ENCODE measurements at regions of chr17 and their contacts with region 1.

Region 1: GRCh38 chr17:13594762-13595598 is 6.7 kb downstream of the HS3ST3A1 start:
- DNase-seq: peak; percentile 94
- H3K4me3 Mint-ChIP-seq: peak overlapping the region; percentile 51
- H3K27ac Mint-ChIP-seq: peak overlapping the region; percentile 71
- H3K4me1 Mint-ChIP-seq: peaks cover 44% of the 10 kb centered on the region
- H3K27me3 Mint-ChIP-seq: no peaks in the 10 kb centered on the region
- CTCF ChIP-seq: peak; percentile 86

Region 2: DNA sequence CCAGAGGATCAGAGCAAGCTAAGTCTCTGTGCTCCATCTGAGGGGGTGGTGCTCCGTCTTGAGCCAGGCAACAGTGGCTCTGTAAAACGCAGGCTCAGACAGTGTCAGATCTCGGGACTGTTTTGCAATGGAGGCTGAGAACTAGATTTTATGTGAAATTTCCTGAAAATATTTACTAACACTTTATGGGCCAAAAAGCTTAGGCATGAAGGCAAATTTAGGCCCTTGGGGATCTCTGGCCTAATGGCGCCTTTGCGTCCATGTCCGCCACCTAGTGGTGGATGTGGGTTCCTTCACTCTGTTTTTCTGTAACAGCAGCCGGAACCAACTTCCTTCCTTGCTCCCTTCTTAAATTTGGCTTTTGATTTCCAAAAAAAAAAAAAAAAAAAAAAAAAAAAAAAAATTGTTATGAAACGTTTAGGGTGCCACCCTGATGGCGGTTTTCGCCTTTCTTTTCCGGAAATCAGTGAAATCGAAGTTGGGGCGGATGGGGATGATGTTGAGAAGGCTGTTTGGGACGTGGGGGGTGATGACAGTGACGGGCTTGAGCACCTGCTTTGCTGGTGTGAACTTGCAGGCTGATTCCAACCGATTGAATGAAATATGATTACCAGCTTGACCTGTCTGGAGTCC is 563.1 kb before region 1 on chr17:
- CTCF ChIA-PET with region 1: interaction called, 5 read pairs
- POLR2A ChIA-PET with region 1: no interaction called
- intact Hi-C with region 1: loop called (anchors 10 kb)
- DNase-seq: peak; percentile 57
- H3K4me3 Mint-ChIP-seq: no peak overlapping the region
- H3K27ac Mint-ChIP-seq: no peak overlapping the region
- H3K4me1 Mint-ChIP-seq: peaks cover 5% of the 10 kb centered on the region
- H3K27me3 Mint-ChIP-seq: peaks cover 37% of the 10 kb centered on the region
- CTCF ChIP-seq: peak; percentile 65

Region 3: DNA sequence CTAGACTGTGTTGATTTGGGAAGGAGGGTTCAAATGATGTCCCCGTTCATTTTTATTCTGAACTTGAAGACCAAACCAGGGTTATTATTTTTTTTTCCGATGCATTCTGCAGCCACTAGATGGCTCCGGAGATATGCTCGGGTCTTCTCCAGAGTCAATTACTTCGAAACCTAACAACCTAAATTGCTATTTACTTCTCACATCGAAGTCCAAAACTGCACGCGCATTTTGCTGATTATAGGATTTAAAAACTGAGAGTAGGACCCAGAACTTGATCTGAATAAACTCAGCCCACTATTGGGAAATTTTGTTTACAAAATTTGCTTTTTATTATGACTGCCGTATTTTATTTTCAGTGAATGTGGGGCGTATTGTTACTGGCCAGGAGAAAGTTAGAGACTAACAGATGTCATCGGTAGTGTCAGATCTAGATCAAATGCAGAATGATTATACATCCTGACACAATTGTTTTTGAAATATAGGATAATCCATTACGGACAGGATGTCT is 257.1 kb before region 1 on chr17:
- CTCF ChIA-PET with region 1: interaction called, 21 read pairs
- POLR2A ChIA-PET with region 1: interaction called, 3 read pairs
- intact Hi-C with region 1: loop called (anchors 1 kb)
- DNase-seq: peak; percentile 77
- H3K4me3 Mint-ChIP-seq: peak overlapping the region; percentile 66
- H3K27ac Mint-ChIP-seq: peak overlapping the region; percentile 23
- H3K4me1 Mint-ChIP-seq: no peaks in the 10 kb centered on the region
- H3K27me3 Mint-ChIP-seq: no peaks in the 10 kb centered on the region
- CTCF ChIP-seq: peak; percentile 79

Region 4: GRCh38 chr17:13420878-13421277 is 174.1 kb before region 1 on chr17:
- CTCF ChIA-PET with region 1: no interaction called
- POLR2A ChIA-PET with region 1: no interaction called
- intact Hi-C with region 1: loop called (anchors 5 kb)
- DNase-seq: peak; percentile 95
- H3K4me3 Mint-ChIP-seq: no peak overlapping the region
- H3K27ac Mint-ChIP-seq: peak overlapping the region; percentile 79
- H3K4me1 Mint-ChIP-seq: peaks cover 43% of the 10 kb centered on the region
- H3K27me3 Mint-ChIP-seq: no peaks in the 10 kb centered on the region
- CTCF ChIP-seq: no peak

Region 5: GRCh38 chr17:13520899-13521572 is 73.9 kb before region 1 on chr17:
- CTCF ChIA-PET with region 1: no interaction called
- POLR2A ChIA-PET with region 1: no interaction called
- intact Hi-C with region 1: no loop called
- DNase-seq: peak; percentile 13
- H3K4me3 Mint-ChIP-seq: no peak overlapping the region
- H3K27ac Mint-ChIP-seq: no peak overlapping the region
- H3K4me1 Mint-ChIP-seq: no peaks in the 10 kb centered on the region
- H3K27me3 Mint-ChIP-seq: no peaks in the 10 kb centered on the region
- CTCF ChIP-seq: no peak

Region 6: GRCh38 chr17:13940858-13941665 is 346.1 kb after region 1 on chr17:
- CTCF ChIA-PET with region 1: interaction called, 5 read pairs
- POLR2A ChIA-PET with region 1: interaction called, 3 read pairs
- intact Hi-C with region 1: loop called (anchors 2 kb)
- DNase-seq: peak; percentile 81
- H3K4me3 Mint-ChIP-seq: no peak overlapping the region
- H3K27ac Mint-ChIP-seq: no peak overlapping the region
- H3K4me1 Mint-ChIP-seq: peaks cover 10% of the 10 kb centered on the region
- H3K27me3 Mint-ChIP-seq: no peaks in the 10 kb centered on the region
- CTCF ChIP-seq: no peak

Region 7: DNA sequence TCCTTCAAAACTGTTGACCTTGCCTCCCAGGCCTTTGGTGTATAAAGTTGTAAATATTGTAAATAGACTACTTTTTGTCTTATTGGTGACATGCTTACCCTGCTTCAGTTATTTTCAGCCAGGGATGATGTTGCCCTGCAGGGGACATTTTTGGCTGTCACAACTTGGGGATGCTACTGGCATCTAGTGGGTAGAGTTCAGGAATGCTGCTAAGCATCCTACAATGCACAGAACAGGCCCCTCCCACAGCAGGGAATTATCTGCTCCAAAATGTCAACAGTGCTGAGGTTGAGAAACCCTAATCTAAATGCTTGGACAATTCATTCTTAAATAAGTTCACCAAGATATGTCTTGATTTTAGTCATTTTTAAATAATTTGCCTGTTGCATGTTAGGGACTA is 1210.4 kb after region 1 on chr17:
- CTCF ChIA-PET with region 1: no interaction called
- POLR2A ChIA-PET with region 1: no interaction called
- intact Hi-C with region 1: loop called (anchors 10 kb)
- DNase-seq: peak; percentile 41
- H3K4me3 Mint-ChIP-seq: no peak overlapping the region
- H3K27ac Mint-ChIP-seq: no peak overlapping the region
- H3K4me1 Mint-ChIP-seq: peaks cover 6% of the 10 kb centered on the region
- H3K27me3 Mint-ChIP-seq: no peaks in the 10 kb centered on the region
- CTCF ChIP-seq: no peak

Region 8: DNA sequence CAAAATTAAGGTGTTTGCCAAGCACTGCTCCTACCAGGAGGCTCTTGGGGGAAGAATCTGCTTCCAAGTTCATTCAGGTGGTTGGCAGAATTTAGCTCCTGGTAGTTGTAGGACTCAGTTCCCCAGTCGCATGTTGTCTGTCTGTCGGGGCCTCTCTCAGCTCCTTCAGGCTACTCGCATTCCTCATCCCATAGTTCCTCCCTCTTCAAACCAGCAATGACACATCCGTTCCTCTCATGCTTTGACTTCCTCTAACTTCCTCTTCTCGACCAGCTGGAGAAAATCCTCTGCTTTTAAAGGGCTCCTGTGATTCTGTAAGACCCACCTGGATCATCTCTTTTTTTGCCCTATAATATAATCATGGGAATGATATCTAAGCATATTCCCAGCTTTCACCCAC is 1562.1 kb after region 1 on chr17:
- CTCF ChIA-PET with region 1: interaction called, 4 read pairs
- POLR2A ChIA-PET with region 1: no interaction called
- intact Hi-C with region 1: loop called (anchors 5 kb)
- DNase-seq: peak; percentile 10
- H3K4me3 Mint-ChIP-seq: no peak overlapping the region
- H3K27ac Mint-ChIP-seq: no peak overlapping the region
- H3K4me1 Mint-ChIP-seq: peaks cover 18% of the 10 kb centered on the region
- H3K27me3 Mint-ChIP-seq: no peaks in the 10 kb centered on the region
- CTCF ChIP-seq: no peak